Sciatic nerve (tissue), 2 donors: ENCODE measurements at regions of chr3 and their contacts with region 1.

Region 1: DNA sequence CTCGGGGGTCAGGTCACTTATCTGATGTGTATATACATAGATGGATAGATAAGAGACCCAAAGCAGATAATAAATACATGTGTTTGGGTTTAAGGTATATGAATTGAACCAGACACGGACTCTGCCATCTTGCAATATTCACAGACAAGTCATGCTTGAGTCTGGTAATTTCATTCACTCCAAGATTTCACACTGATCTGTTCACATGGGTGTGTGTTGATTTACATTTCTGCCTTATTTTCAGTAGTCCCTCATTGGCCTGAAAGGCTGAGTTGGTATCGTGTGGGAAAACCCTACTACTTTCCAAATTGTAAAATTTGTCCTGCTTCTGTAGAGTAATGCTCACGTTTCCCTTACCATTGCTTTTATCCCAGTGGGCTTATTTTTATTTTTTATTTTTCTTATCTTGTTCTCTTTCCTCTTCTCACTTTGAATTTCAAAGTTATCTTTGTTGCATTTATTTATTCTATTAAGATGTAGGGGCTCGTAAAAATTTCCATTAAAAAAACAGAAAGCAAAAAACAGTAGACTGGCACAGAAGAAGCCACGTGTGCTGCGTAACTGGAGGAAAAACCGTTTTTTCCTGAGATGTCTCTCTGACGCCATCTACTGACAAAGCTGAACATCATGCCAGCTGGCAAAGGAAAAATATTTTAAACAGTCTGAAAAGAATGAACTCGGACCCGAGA is 10.8 kb upstream of the MFSD1 start:
- DNase-seq: no peak
- ATAC-seq: peak; percentile 76

Region 2: GRCh38 chr3:158727206-158728060 is 63.6 kb before region 1 on chr3:
- intact Hi-C with region 1: loop called (anchors 5 kb)
- DNase-seq: no peak
- ATAC-seq: peak; percentile 38